Activated naive CD4-positive, alpha-beta T cell treated with anti-CD3 and anti-CD28 coated beads for 36 hours (primary cell): ENCODE measurements at regions of chr4 and their contacts with region 1.

Region 1: DNA sequence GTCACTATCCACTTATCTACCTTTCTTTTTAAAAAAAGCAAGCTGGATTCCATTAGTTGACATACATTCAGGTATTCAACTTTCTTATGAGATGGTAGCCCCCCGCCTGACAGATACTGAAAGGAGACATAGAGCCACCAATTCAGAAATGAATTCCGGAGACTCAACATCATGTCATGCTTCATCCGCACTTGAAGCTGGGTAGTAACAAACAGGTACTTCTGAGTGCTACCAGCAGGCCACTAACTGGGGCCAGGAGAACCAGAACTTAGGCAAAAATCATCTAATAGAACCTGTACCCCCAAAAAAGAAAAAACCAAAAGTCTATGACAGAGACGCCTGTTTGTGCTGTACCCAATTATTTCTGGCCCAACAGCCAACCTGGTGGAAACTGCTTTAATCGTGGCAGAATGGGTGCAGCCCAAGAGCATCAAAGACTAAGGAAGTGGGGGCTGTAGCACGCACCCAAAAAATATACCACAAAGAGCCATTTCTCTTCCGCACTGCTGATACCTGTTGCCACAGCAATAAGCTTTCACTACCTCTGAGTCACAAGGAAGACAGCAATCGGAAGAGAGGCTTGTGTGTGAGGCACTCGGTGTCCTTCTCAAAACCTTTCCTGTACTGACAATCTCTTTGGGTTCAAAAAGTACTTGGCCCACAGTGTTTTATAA is 84.8 kb downstream of the AFAP1 start:
- DNase-seq: peak; percentile 83
- H3K4me3 Mint-ChIP-seq: peak overlapping the region; percentile 41
- H3K27ac Mint-ChIP-seq: peak overlapping the region; percentile 83
- H3K4me1 Mint-ChIP-seq: peaks cover 91% of the 10 kb centered on the region
- H3K27me3 Mint-ChIP-seq: no peaks in the 10 kb centered on the region

Region 2: GRCh38 chr4:7313347-7313811 is 541.5 kb before region 1 on chr4:
- CTCF ChIA-PET with region 1: no interaction called
- intact Hi-C with region 1: no loop called
- DNase-seq: no peak
- H3K4me3 Mint-ChIP-seq: no peak overlapping the region
- H3K27ac Mint-ChIP-seq: no peak overlapping the region
- H3K4me1 Mint-ChIP-seq: no peaks in the 10 kb centered on the region
- H3K27me3 Mint-ChIP-seq: no peaks in the 10 kb centered on the region

Region 3: GRCh38 chr4:7761720-7762119 is 93.1 kb before region 1 on chr4:
- CTCF ChIA-PET with region 1: no interaction called
- intact Hi-C with region 1: loop called (anchors 1 kb)
- DNase-seq: peak; percentile 69
- H3K4me3 Mint-ChIP-seq: no peak overlapping the region
- H3K27ac Mint-ChIP-seq: peak overlapping the region; percentile 76
- H3K4me1 Mint-ChIP-seq: peaks cover 39% of the 10 kb centered on the region
- H3K27me3 Mint-ChIP-seq: no peaks in the 10 kb centered on the region

Region 4: GRCh38 chr4:7827991-7828720 is 26.7 kb before region 1 on chr4:
- CTCF ChIA-PET with region 1: interaction called, 3 read pairs
- intact Hi-C with region 1: loop called (anchors 1 kb)
- DNase-seq: peak; percentile 65
- H3K4me3 Mint-ChIP-seq: peak overlapping the region; percentile 11
- H3K27ac Mint-ChIP-seq: peak overlapping the region; percentile 84
- H3K4me1 Mint-ChIP-seq: peaks cover 56% of the 10 kb centered on the region
- H3K27me3 Mint-ChIP-seq: no peaks in the 10 kb centered on the region

Region 5: DNA sequence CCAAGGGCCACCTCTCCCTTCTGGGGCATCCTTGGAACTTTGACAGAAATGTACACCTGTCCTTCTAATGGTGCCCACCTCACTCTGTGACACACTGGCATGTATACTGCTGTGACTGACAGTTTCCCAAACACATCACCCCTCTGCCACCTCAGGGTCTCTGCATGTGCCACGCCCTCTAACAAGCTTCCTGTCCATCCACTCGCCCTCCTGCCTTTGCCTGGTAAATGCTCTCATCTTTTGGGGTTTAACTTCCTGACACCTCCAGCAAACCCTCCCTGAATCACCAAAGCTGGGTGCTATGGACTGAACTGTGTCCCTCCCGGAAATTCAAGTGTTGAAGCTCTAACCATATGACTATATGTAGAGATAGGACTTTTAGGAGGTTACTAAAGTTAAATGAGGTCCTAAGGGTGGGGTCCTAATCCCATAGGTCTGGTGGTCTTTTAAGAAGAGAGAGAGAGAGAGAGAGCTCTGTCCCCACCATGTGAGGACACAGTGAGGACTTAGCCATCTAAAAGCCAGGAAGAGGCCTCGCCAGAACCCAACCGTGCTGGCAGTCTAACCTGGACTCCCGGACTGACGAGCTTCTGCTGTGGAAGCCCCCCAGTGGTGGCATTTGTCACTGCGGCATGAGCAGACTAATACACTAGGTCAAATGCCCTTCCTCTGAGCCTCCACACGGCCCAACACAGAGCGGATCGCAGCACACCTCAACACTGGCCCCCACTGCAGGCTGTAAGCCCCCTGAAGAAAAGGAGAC is 10.8 kb before region 1 on chr4:
- CTCF ChIA-PET with region 1: interaction called, 11 read pairs
- intact Hi-C with region 1: no loop called
- DNase-seq: peak; percentile 77
- H3K4me3 Mint-ChIP-seq: no peak overlapping the region
- H3K27ac Mint-ChIP-seq: peak overlapping the region; percentile 20
- H3K4me1 Mint-ChIP-seq: peaks cover 26% of the 10 kb centered on the region
- H3K27me3 Mint-ChIP-seq: no peaks in the 10 kb centered on the region

Region 6: DNA sequence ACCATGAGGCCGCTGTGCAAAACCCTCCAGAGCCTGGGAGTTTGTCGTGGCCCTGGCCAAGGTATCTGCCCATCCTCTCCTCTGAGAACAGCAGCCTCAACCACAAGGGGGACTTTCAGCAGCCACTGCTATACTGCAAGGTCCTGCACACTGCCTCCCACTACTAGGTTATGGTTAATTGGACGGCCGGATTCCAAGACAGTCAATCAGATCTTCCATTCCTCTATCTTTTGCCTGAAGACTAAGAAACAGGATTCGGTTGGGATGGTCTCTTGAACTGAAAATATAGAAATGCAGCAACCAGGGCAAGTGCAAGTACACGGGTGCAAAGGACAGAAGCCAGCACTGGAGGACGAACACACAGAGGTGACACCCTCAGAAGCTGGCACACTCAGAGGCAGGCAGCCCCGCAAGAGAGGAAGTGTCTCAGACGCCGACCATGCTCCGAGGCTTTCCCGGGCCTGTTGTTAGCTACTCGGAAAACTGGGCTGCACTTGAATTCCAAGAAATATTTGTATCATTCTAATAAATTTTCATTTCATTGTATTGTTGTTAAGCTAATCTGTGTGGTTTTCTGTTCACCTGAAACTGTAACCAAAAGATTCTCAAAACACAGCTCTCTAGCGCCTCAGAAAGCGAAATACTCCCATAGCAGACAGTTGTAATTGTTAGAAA is 21.5 kb after region 1 on chr4:
- CTCF ChIA-PET with region 1: no interaction called
- intact Hi-C with region 1: loop called (anchors 2 kb)
- DNase-seq: peak; percentile 45
- H3K4me3 Mint-ChIP-seq: peak overlapping the region; percentile 54
- H3K27ac Mint-ChIP-seq: peak overlapping the region; percentile 74
- H3K4me1 Mint-ChIP-seq: peaks cover 49% of the 10 kb centered on the region
- H3K27me3 Mint-ChIP-seq: no peaks in the 10 kb centered on the region

Region 7: DNA sequence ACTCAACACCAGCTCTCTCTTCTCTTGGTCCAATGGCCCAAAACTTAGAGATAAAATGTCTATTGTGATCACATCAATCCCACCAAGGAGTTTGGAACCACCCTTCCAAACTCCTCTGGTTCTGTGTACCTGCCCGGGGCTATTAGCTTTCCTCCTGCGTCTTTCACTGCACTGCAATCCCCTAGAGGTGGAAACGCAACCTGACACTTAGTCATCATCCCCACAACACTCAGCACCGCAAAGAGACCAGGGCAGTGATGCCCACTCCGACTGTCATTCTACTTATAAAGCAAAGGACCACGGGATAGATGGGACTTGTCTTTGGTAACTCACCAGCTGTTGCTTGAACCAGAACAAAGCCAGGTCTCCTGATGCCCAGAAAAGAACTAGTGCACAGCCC is 62.8 kb after region 1 on chr4:
- CTCF ChIA-PET with region 1: no interaction called
- intact Hi-C with region 1: loop called (anchors 2 kb)
- DNase-seq: no peak
- H3K4me3 Mint-ChIP-seq: no peak overlapping the region
- H3K27ac Mint-ChIP-seq: no peak overlapping the region
- H3K4me1 Mint-ChIP-seq: peaks cover 38% of the 10 kb centered on the region
- H3K27me3 Mint-ChIP-seq: no peaks in the 10 kb centered on the region

Region 8: DNA sequence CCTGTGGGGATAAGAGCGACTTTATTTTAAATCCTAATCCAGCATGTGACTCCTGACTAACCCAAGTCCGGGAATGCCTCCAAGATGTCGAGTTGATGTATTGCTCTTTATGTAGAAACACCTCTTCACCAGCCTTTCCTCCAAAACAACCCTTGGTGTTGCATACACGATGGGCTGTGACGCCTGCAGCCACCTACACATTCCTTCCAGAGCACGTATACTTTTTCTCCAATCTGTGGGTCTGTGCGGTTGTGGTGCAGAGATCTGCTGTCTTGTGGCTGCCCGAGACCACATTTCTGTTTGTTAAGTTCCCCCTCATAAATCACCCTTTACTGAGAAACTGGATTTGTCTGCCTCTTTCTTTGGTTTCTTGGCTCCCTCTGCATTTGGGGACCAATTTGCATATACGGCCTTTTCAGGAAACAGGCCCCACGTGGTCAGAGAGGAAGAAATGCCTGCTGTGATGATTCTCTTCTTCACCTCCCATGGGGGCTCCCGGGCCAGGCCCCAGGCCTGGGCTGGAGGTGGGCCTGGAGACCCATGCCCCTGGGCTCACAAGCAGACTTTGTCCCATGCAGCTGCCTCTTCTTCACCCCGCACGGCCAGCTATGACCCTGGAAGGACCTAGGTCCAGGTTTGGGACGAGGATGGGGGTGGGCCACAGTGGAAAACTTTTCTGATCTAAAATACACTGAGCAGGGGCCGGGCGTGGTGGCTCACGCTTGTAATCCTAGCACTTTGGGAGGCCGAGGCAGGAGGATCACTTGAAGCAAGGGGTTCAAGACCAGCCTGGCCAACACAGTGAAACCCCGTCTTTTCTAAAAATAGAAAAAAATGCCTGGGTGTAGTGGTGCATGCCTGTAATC is 106.2 kb after region 1 on chr4:
- CTCF ChIA-PET with region 1: no interaction called
- intact Hi-C with region 1: loop called (anchors 2 kb)
- DNase-seq: peak; percentile 87
- H3K4me3 Mint-ChIP-seq: peak overlapping the region; percentile 2
- H3K27ac Mint-ChIP-seq: peak overlapping the region; percentile 68
- H3K4me1 Mint-ChIP-seq: peaks cover 48% of the 10 kb centered on the region
- H3K27me3 Mint-ChIP-seq: no peaks in the 10 kb centered on the region

Region 9: GRCh38 chr4:8000721-8001491 is 146.1 kb after region 1 on chr4:
- CTCF ChIA-PET with region 1: no interaction called
- intact Hi-C with region 1: no loop called
- DNase-seq: no peak
- H3K4me3 Mint-ChIP-seq: no peak overlapping the region
- H3K27ac Mint-ChIP-seq: no peak overlapping the region
- H3K4me1 Mint-ChIP-seq: no peaks in the 10 kb centered on the region
- H3K27me3 Mint-ChIP-seq: no peaks in the 10 kb centered on the region

Region 10: GRCh38 chr4:8920293-8920965 is 1065.6 kb after region 1 on chr4:
- CTCF ChIA-PET with region 1: no interaction called
- intact Hi-C with region 1: no loop called
- DNase-seq: no peak
- H3K4me3 Mint-ChIP-seq: no peak overlapping the region
- H3K27ac Mint-ChIP-seq: no peak overlapping the region
- H3K4me1 Mint-ChIP-seq: peaks cover 2% of the 10 kb centered on the region
- H3K27me3 Mint-ChIP-seq: peaks cover 16% of the 10 kb centered on the region